SK-N-SH (cell line): ENCODE measurements at regions of chr5 and their contacts with region 1.

Region 1: GRCh38 chr5:146965761-146966659 is 87.5 kb upstream of the PPP2R2B start:
- DNase-seq: peak; percentile 62
- H3K4me3 ChIP-seq: no peak overlapping the region; a peak in 1 of 4 replicates
- H3K27ac ChIP-seq: no peak overlapping the region; a peak in 1 of 4 replicates
- H3K4me1 ChIP-seq: peaks cover 0 to 12% of the 10 kb centered on the region in 2 experiments; a peak in 2 of 4 replicates
- H3K27me3 ChIP-seq: no peaks in the 10 kb centered on the region
- CTCF ChIP-seq: peak; percentile 85
- EP300 ChIP-seq: no peak
- RAD21 ChIP-seq: peak; percentile 99

Region 2: DNA sequence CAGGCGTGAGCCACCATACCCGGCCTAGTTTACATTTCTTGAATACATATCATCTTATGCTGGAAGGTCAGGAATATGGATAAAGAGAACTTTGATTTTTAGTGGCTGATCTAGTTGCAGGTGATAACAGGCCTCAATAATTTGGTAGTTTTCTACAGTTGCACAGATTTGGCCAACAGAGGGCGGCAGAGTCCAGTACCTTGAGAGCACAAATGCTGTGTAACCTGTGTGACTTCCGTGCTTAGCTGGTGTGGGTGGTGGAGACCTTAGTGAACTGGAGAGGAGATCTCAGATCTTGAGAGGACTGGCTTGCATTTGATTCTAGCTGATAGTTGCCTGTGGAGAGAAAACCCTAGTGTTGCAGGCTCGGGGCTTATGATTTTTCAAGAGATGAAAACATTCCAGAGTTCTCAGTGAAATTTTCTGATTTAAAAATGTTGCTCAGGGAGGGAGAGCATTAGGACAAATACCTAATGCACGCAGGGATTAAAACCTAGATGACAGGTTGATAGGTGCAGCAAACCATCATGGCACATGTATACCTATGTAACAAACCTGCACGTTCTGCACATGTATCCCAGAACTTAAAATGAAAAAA is 432.7 kb before region 1 on chr5:
- CTCF ChIA-PET with region 1: interaction called, 176 read pairs
- POLR2A ChIA-PET with region 1: interaction called, 3 read pairs
- DNase-seq: peak; percentile 71
- H3K4me3 ChIP-seq: no peak overlapping the region; a peak in 1 of 4 replicates
- H3K27ac ChIP-seq: no peak overlapping the region
- H3K4me1 ChIP-seq: no peaks in the 10 kb centered on the region
- H3K27me3 ChIP-seq: no peaks in the 10 kb centered on the region
- CTCF ChIP-seq: peak; percentile 93
- EP300 ChIP-seq: no peak
- RAD21 ChIP-seq: peak; percentile 95

Region 3: DNA sequence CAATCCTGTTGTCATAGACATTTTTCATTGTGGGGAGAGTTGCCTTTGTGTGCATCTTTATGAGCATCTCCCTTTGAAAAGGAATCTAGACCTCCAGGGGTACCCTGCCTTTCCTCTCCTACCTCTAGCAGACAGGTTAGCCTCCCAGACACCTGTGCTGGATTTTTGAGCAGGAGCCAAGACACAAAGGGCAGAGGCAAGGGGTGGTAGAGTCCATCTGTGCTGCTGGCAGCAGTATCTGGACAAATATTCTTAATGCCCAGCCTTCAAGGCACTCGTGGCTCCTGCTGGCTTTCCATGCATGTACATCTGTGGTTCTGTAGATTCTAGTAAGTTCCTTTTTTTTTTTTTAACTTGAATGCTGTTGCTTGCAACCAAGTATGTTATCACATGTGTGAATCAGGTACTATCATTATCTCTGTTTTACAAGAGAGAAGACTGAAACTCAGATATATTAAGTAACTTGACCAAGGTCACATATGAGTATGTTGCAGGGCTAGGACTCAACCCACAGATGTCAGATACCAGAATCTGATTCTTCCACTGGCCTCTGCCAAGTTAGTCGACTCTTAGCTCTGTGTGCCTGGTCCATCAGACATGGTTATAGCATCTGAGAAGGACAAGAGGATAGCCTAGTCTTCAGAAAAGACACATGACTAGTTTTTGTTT is 417.1 kb before region 1 on chr5:
- CTCF ChIA-PET with region 1: interaction called, 31 read pairs
- POLR2A ChIA-PET with region 1: no interaction called
- DNase-seq: no peak
- H3K4me3 ChIP-seq: no peak overlapping the region
- H3K27ac ChIP-seq: no peak overlapping the region
- H3K4me1 ChIP-seq: peaks cover 0 to 8% of the 10 kb centered on the region in 2 experiments; a peak in 2 of 4 replicates
- H3K27me3 ChIP-seq: no peaks in the 10 kb centered on the region
- CTCF ChIP-seq: no peak
- EP300 ChIP-seq: no peak
- RAD21 ChIP-seq: no peak

Region 4: DNA sequence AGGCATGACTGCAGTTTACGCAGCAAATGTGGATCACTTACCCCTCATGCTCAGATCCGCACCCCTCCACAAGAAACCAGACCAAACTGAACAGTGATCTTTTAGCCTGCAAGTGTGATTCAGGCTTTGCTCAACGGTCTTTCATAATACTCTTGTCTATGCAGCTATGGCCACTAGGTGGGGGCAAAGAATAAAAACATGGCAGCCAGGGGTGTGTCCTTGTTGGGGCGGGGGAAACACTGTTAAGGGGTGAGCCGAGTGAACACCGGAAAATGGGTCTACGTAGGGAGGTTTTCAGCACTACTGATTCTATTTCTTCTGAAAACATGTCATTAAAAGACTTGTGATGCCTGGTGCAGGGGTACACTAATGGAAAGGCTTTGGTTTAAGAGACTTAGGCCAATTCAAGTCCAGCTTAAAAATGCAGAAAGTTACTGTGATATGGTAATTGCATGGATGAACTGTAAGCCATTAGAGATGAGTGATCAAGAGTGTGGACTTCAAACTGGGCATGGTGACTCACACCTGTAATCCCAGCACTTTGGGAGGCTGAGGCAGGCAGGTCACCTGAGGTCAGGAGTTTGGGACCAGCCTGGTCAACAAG is 400.1 kb before region 1 on chr5:
- CTCF ChIA-PET with region 1: interaction called, 38 read pairs
- POLR2A ChIA-PET with region 1: no interaction called
- DNase-seq: peak; percentile 75
- H3K4me3 ChIP-seq: peak overlapping the region in 1 of 2 experiments; percentile 23; a peak in 1 of 4 replicates
- H3K27ac ChIP-seq: no peak overlapping the region
- H3K4me1 ChIP-seq: peaks cover 2 to 18% of the 10 kb centered on the region in 2 experiments; a peak in 3 of 4 replicates
- H3K27me3 ChIP-seq: no peaks in the 10 kb centered on the region
- CTCF ChIP-seq: peak; percentile 77
- EP300 ChIP-seq: no peak
- RAD21 ChIP-seq: peak; percentile 92

Region 5: GRCh38 chr5:146878476-146879172 is 87.4 kb before region 1 on chr5 and contains the start of gene PPP2R2B:
- CTCF ChIA-PET with region 1: interaction called, 12 read pairs
- POLR2A ChIA-PET with region 1: no interaction called
- DNase-seq: peak; percentile 86
- H3K4me3 ChIP-seq: peak within 1 kb of the TSS; percentile 78 to 88
- H3K27ac ChIP-seq: peak within 1 kb of the TSS in 1 of 2 experiments; percentile 64; a peak in 2 of 4 replicates
- H3K4me1 ChIP-seq: peaks cover 0 to 9% of the 10 kb centered on the region in 2 experiments; a peak in 2 of 4 replicates
- H3K27me3 ChIP-seq: no peaks in the 10 kb centered on the region
- CTCF ChIP-seq: no peak
- EP300 ChIP-seq: no peak
- RAD21 ChIP-seq: 0 out of 2 replicates have a peak, but pooled peaks have one; percentile 3
- polyA plus RNA-seq, gene PPP2R2B: 11.4 and 11.9 TPM in 2 replicates

Region 6: GRCh38 chr5:147188200-147189108 is 222.4 kb after region 1 on chr5:
- CTCF ChIA-PET with region 1: interaction called, 124 read pairs
- POLR2A ChIA-PET with region 1: interaction called, 4 read pairs
- DNase-seq: peak; percentile 46
- H3K4me3 ChIP-seq: peak overlapping the region in 1 of 2 experiments; percentile 44; a peak in 2 of 4 replicates
- H3K27ac ChIP-seq: no peak overlapping the region
- H3K4me1 ChIP-seq: peaks cover 4 to 7% of the 10 kb centered on the region in 2 experiments; a peak in 2 of 4 replicates
- H3K27me3 ChIP-seq: no peaks in the 10 kb centered on the region
- CTCF ChIP-seq: peak; percentile 90
- EP300 ChIP-seq: 0 out of 4 replicates have a peak, but pooled peaks of 1 of the 2 experiments have one; percentile 7
- RAD21 ChIP-seq: peak; percentile 93